K562 (cell line): ENCODE measurements at regions of chr16 and their contacts with region 1.

Region 1: DNA sequence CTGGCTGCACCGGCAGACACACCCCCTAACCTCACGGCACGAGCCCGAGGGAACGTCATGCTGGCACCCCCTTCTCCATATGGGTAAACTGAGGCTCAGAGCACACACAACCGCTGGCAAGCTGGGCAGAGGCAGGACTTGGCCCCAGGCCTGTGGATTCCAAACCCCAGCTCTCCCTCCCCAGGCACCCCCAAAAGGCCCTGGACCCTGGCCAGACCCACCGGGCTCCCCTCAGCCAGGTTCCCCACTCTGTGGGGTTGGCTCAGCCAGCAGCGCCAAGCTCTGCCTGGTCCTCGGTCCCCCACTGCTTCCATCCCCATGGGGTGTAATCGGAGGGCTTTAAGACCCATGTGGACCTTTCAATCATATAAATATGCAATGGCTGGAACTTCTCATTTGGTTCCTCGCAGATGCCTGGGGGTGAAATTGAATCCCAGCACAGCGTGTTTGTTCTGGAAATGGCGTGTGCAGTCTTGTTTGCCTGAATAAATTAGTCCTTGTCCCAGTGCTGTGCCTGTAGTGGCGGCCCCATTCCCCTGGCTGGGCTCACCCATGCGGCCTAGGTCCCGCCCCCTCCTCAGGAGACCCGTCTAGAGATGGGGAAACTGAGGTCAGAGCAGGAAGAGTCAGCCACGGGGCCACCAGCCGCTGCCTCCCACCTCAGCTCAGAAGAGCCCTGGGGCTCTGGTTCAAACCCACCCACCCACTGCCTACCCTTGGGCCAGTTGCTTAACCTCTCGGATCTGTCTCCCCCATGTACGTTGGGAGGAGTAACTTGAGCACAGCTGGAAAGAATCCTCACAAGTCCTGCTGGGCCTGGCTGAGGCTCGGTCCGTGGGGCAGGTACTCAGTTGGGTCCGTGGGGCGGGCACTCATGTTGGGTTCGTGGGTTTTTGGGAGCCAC is 57.3 kb downstream of the ZFPM1 start:
- DNase-seq: no peak
- ATAC-seq: no peak
- H3K4me3 ChIP-seq: no peak overlapping the region
- H3K27ac ChIP-seq: no peak overlapping the region; the same call in 2 of the 3 replicates
- H3K4me1 ChIP-seq: peaks cover 19 to 92% of the 10 kb centered on the region in 2 experiments
- H3K27me3 ChIP-seq: no peaks in the 10 kb centered on the region
- CTCF ChIP-seq: no peak
- EP300 ChIP-seq: no peak
- POLR2A ChIP-seq: no peak
- RAD21 ChIP-seq: no peak

Region 2: GRCh38 chr16:88442727-88443576 is 67.4 kb before region 1 on chr16:
- CTCF ChIA-PET with region 1: no interaction called
- POLR2A ChIA-PET with region 1: no interaction called
- in situ Hi-C with region 1: no loop called
- intact Hi-C with region 1: no loop called
- DNase-seq: peak; percentile 85 to 93 (median 91)
- ATAC-seq: peak; percentile 98
- H3K4me3 ChIP-seq: no peak overlapping the region
- H3K27ac ChIP-seq: no peak overlapping the region
- H3K4me1 ChIP-seq: peaks cover 3 to 86% of the 10 kb centered on the region in 2 experiments; a peak in 4 of 5 replicates
- H3K27me3 ChIP-seq: peaks cover 0 to 19% of the 10 kb centered on the region in 2 experiments; a peak in 2 of 5 replicates
- CTCF ChIP-seq: peak; percentile 91 to 97 (median 95)
- EP300 ChIP-seq: no peak
- POLR2A ChIP-seq: no peak
- RAD21 ChIP-seq: peak; percentile 99 to 100

Region 3: DNA sequence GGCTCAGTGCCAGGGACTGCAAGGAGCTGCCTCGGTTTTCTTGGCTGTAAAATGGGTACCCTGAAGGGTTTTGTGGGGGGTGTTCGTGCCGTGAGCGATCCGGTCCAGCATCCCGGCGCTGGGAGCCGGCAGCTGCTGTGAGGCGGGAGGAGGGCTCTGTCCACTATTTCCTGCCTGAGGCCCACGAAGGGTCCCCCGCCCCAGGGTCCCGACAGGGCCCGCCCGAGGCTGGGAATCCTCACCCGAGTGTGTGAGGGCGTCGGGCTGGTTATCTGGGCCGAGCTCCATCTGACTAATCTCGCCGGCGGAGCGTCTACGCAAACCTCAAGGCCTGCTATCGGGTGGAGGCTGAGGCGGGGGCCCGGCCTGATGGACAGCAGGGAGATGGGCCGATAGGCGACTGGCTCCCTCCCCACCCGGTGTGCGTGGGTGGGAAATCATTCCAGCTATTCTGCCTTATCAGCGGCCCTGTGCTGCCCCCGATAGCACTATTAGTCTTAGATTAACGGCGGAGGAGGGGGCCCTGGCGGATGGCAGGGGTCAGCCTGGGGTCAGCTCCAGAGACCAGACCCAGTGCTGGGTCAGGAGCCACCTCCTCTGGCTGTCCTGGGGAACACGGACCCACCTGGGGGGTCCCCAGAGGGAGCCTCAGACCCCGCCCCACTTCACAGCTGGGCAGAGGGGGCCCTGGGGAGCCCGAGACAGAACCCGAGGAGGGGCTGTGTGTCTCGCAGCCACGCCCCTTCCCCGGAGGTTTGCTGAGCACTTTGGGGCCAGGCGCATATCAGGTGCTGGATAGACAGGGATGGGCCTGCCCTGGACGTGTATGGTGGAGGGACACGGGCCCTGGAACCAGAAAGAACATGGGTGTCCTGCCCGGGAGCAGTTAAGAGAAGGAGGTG is 12.5 kb before region 1 on chr16:
- CTCF ChIA-PET with region 1: no interaction called
- POLR2A ChIA-PET with region 1: interaction called, 10 read pairs
- in situ Hi-C with region 1: no loop called
- intact Hi-C with region 1: no loop called
- DNase-seq: peak; percentile 92 to 98 (median 93)
- ATAC-seq: peak; percentile 65
- H3K4me3 ChIP-seq: no peak overlapping the region
- H3K27ac ChIP-seq: peak overlapping the region; percentile 66
- H3K4me1 ChIP-seq: peaks cover 68 to 96% of the 10 kb centered on the region in 2 experiments
- H3K27me3 ChIP-seq: no peaks in the 10 kb centered on the region
- CTCF ChIP-seq: no peak; a peak in 1 of 6 replicates
- EP300 ChIP-seq: peak; percentile 95
- POLR2A ChIP-seq: no peak; the same call in 1 of the 2 replicates
- RAD21 ChIP-seq: no peak; a peak in 1 of 4 replicates